Caco-2 (cell line): ENCODE measurements at regions of chr13 and their contacts with region 1.

Region 1: GRCh38 chr13:49342454-49342853 is 94.7 kb downstream of the CDADC1 start:
- DNase-seq: no peak
- H3K4me3 ChIP-seq: no peak overlapping the region
- H3K4me3 Mint-ChIP-seq: no peak overlapping the region
- H3K27ac Mint-ChIP-seq: no peak overlapping the region
- H3K4me1 ChIP-seq: peaks cover 54% of the 10 kb centered on the region
- H3K4me1 Mint-ChIP-seq: peaks cover 19% of the 10 kb centered on the region
- H3K27me3 ChIP-seq: no peaks in the 10 kb centered on the region
- H3K27me3 Mint-ChIP-seq: no peaks in the 10 kb centered on the region
- CTCF ChIP-seq: no peak

Region 2: DNA sequence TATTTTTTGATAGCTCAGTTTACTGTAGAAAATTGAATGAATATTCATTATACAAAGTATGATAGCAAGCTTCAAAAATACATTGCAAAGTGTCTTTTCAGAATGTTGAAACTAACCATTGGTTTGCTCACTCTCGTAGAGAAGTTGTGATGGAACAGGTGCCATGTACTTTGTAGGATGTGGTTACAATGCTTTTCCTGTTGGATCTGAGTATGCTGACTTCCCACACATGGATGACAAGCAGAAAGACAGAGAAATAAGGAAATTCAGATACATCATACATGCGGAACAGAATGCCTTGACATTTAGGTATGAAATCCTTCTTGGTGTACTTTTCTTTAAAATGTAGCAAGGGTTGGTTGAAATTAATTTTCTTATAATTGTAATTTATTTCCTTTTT is 64.2 kb before region 1 on chr13:
- CTCF ChIA-PET with region 1: no interaction called
- POLR2A ChIA-PET with region 1: no interaction called
- intact Hi-C with region 1: no loop called
- DNase-seq: no peak
- H3K4me3 ChIP-seq: no peak overlapping the region
- H3K4me3 Mint-ChIP-seq: no peak overlapping the region
- H3K27ac Mint-ChIP-seq: no peak overlapping the region
- H3K4me1 ChIP-seq: 0 out of 2 replicates have a peak, but pooled peaks cover 3% of the 10 kb centered on the region
- H3K4me1 Mint-ChIP-seq: no peaks in the 10 kb centered on the region
- H3K27me3 ChIP-seq: no peaks in the 10 kb centered on the region
- H3K27me3 Mint-ChIP-seq: no peaks in the 10 kb centered on the region
- CTCF ChIP-seq: no peak

Region 3: DNA sequence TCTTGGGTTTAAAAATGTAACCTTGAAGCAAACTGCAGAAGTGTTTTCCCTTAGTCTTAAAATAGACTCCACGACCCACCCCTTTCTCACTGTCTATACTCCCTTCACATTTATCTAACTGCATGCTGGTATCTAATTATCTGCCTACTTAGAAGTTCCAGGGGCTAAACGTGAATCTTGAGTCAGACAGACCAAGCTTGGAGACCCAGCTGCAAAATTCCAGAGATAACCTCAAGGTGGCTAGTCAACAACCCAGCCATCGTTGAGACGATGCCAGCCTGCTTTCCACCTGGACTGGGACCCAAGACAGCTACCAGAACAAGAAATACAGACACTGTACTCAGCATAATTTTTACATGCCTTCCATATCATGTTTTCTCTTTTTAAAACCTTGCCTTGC is 12.6 kb before region 1 on chr13:
- CTCF ChIA-PET with region 1: interaction called, 3 read pairs
- POLR2A ChIA-PET with region 1: no interaction called
- intact Hi-C with region 1: loop called (anchors 1 kb)
- DNase-seq: peak in 1 of 2 experiments; percentile 32
- H3K4me3 ChIP-seq: no peak overlapping the region
- H3K4me3 Mint-ChIP-seq: no peak overlapping the region
- H3K27ac Mint-ChIP-seq: peak overlapping the region; percentile 37
- H3K4me1 ChIP-seq: peaks cover 20% of the 10 kb centered on the region
- H3K4me1 Mint-ChIP-seq: peaks cover 27% of the 10 kb centered on the region
- H3K27me3 ChIP-seq: no peaks in the 10 kb centered on the region
- H3K27me3 Mint-ChIP-seq: no peaks in the 10 kb centered on the region
- CTCF ChIP-seq: no peak

Region 4: DNA sequence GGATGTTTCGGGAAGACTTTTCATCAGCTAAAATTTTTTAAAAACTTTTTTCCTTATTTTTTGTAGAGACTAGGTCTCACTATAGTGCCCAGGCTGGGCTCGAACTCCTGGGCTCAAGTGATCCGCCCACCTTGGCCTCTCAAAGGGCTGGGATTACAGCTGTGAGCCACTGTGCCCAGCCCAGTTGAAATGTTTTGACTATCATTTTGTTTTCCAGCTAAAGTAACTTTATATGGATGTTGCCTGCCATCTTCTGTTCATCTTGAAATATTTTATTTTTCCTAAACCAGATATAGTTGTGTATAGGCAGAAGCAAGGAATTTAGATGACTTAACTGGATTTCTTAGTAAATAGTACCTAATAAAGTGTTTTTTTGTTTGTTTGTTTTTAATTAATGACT is 94.4 kb after region 1 on chr13:
- CTCF ChIA-PET with region 1: no interaction called
- POLR2A ChIA-PET with region 1: no interaction called
- intact Hi-C with region 1: no loop called
- DNase-seq: peak in 1 of 2 experiments; percentile 28
- H3K4me3 ChIP-seq: no peak overlapping the region
- H3K4me3 Mint-ChIP-seq: no peak overlapping the region
- H3K27ac Mint-ChIP-seq: no peak overlapping the region
- H3K4me1 ChIP-seq: no peaks in the 10 kb centered on the region
- H3K4me1 Mint-ChIP-seq: no peaks in the 10 kb centered on the region
- H3K27me3 ChIP-seq: no peaks in the 10 kb centered on the region
- H3K27me3 Mint-ChIP-seq: no peaks in the 10 kb centered on the region
- CTCF ChIP-seq: no peak

Region 5: DNA sequence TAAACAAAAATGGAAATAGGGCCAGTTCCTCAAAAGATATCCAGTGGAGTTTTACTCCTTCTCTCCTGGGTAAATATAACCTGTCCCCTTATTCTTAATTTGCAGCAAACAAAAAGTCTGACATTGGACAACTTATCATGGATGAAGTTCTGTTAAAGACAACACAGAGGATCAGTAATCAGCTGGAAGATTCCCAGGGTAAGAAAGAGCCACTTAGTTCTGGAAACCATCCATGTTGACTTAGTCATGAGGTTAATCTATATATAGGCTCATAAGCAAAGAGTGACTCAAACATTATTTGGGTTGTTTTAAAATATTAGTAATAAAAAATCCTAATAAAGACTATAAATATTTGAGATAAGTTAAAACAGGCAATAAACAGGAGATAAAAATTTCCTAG is 389.3 kb after region 1 on chr13:
- CTCF ChIA-PET with region 1: no interaction called
- POLR2A ChIA-PET with region 1: no interaction called
- intact Hi-C with region 1: no loop called
- DNase-seq: no peak
- H3K4me3 ChIP-seq: no peak overlapping the region
- H3K4me3 Mint-ChIP-seq: no peak overlapping the region
- H3K27ac Mint-ChIP-seq: no peak overlapping the region
- H3K4me1 ChIP-seq: no peaks in the 10 kb centered on the region
- H3K4me1 Mint-ChIP-seq: peaks cover 6% of the 10 kb centered on the region
- H3K27me3 ChIP-seq: no peaks in the 10 kb centered on the region
- H3K27me3 Mint-ChIP-seq: no peaks in the 10 kb centered on the region
- CTCF ChIP-seq: no peak